Esophagus squamous epithelium (tissue), 5 donors: ENCODE measurements at regions of chr10 and their contacts with region 1.

Region 1: GRCh38 chr10:103781329-103782061 is 73.9 kb downstream of the SH3PXD2A start:
- DNase-seq: no peak
- H3K4me3 ChIP-seq: no peak overlapping the region
- H3K27ac ChIP-seq: peak overlapping the region; percentile 88 to 94 (median 90)
- H3K4me1 ChIP-seq: peaks cover 61 to 100% (median 75%) of the 10 kb centered on the region in 3 donors
- H3K27me3 ChIP-seq: no peaks in the 10 kb centered on the region
- CTCF ChIP-seq: peak in 3 of 6 experiments; percentile 39 to 69 (median 48)
- POLR2A ChIP-seq: no peak

Region 2: GRCh38 chr10:103740611-103741010 is 40.9 kb before region 1 on chr10:
- intact Hi-C with region 1: loop called (anchors 5 kb)
- DNase-seq: no peak
- H3K4me3 ChIP-seq: no peak overlapping the region
- H3K27ac ChIP-seq: peak overlapping the region; percentile 63 to 90 (median 84)
- H3K4me1 ChIP-seq: peaks cover 50 to 84% (median 56%) of the 10 kb centered on the region in 3 donors
- H3K27me3 ChIP-seq: no peaks in the 10 kb centered on the region
- CTCF ChIP-seq: no peak
- POLR2A ChIP-seq: no peak

Region 3: GRCh38 chr10:103859161-103860086 is 77.9 kb after region 1 on chr10:
- intact Hi-C with region 1: loop called (anchors 10 kb)
- DNase-seq: no peak
- H3K4me3 ChIP-seq: no peak overlapping the region
- H3K27ac ChIP-seq: peak overlapping the region in 2 of 4 donors; percentile 44 to 46
- H3K4me1 ChIP-seq: peaks cover 12 to 38% (median 12%) of the 10 kb centered on the region in 3 donors
- H3K27me3 ChIP-seq: no peaks in the 10 kb centered on the region
- CTCF ChIP-seq: peak in 5 of 6 experiments; percentile 73 to 83 (median 74)
- POLR2A ChIP-seq: no peak

Region 4: DNA sequence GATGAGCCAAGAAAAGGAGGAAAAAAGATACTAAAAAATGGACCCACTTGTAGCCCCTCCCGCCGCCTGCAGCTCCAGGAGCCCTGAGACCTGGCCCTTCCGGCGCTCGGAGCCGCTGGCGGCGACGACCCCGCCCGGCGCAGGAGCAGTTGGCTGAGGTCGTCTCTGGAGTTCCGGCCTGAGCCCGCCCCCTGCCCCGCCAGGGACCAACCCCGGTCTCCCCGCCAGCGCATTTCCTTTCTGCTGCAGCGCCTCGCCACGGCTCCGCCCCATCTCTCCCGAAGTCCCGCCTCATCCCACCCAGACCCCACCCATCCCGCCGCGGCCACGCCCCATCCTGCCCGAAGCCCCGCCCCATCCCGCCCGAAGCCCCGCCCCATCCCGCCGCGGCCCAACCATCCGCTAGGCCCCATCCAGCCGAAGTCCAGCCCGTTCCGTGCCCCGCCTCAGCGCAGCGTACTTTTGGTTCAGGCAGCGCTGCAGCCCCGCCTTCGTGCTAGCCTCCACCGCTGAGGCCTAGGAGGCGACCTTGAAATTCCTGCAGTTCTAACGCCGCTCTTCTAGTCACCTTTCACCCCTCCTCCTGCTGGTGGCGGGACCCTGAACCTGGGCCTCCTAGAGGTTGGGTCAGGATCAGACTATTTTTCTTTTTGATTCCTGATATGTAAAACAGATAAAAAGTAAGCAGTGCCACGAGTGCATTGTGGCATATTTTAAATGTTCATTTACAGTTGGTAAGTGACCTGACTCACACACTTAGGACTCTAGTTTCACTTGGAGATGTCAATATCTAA is 136.8 kb after region 1 on chr10 and contains the start of gene STN1:
- intact Hi-C with region 1: no loop called
- DNase-seq: peak; percentile 80
- H3K4me3 ChIP-seq: peak within 1 kb of the TSS; percentile 61 to 81 (median 76)
- H3K27ac ChIP-seq: peak within 1 kb of the TSS; percentile 94 to 99 (median 97)
- H3K4me1 ChIP-seq: peaks cover 15 to 80% (median 18%) of the 10 kb centered on the region in 3 donors
- H3K27me3 ChIP-seq: no peaks in the 10 kb centered on the region
- CTCF ChIP-seq: peak in 2 of 6 experiments; percentile 26 to 30
- POLR2A ChIP-seq: peak in 3 of 4 donors; percentile 89 to 95 (median 95)
- total RNA-seq, gene STN1: 20.4 to 52.8 (median 32.5) TPM

Region 5: GRCh38 chr10:104002911-104003310 is 221.4 kb after region 1 on chr10:
- intact Hi-C with region 1: no loop called
- DNase-seq: no peak
- H3K4me3 ChIP-seq: no peak overlapping the region
- H3K27ac ChIP-seq: no peak overlapping the region
- H3K4me1 ChIP-seq: no peaks in the 10 kb centered on the region
- H3K27me3 ChIP-seq: no peaks in the 10 kb centered on the region
- CTCF ChIP-seq: no peak
- POLR2A ChIP-seq: no peak